ENCODE measurements at regions of chr12 and their contacts with region 1.

Region 1: GRCh38 chr12:3275171-3276041 is 198.2 kb downstream of the TSPAN9 start:
- DNase-seq: peak; percentile 87
- ATAC-seq: peak; percentile 83
- H3K4me3 Mint-ChIP-seq: no peak overlapping the region
- H3K27ac Mint-ChIP-seq: no peak overlapping the region
- H3K4me1 Mint-ChIP-seq: peaks cover 2% of the 10 kb centered on the region
- H3K27me3 Mint-ChIP-seq: peaks cover 8% of the 10 kb centered on the region

Region 2: DNA sequence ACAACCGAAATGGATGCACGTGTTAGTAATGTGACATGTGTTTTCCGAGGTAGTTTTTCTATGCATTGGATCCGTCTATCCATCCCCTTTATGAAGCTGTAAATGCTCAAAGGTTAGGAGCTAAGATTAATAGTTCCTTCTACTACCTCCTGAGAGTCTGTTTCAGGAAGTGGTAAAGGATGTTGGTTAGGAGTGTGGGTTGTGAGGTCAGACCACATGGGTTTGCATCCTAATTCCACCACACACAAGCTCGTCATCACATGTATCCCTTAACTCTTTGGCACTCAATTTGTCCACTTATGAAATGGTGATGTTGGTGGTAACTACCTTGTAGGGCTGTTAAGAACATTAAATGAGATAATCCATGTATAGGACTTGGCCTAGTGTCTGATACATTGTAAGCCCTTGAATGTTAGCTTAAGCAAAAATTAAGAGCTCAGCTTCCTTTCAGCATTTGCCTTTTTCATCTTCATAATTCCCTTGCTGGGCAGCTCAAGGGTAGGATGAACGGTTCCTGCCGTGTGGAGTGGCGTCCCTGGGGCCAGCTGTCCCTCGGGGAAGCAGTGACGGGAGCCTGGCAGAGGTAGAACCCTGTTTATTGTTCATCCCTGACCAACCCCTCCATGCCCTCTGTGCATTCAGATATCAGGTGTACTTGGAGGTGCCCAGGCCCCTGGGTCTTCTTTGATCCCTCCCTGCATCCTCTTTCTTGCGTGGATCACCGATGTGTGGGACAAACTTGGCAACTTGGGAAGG is 145.9 kb before region 1 on chr12:
- CTCF ChIA-PET with region 1: interaction called, 101 read pairs
- POLR2A ChIA-PET with region 1: no interaction called
- intact Hi-C with region 1: no loop called
- DNase-seq: peak; percentile 49
- ATAC-seq: peak; percentile 36
- H3K4me3 Mint-ChIP-seq: no peak overlapping the region
- H3K27ac Mint-ChIP-seq: no peak overlapping the region
- H3K4me1 Mint-ChIP-seq: peaks cover 21% of the 10 kb centered on the region
- H3K27me3 Mint-ChIP-seq: peaks cover 54% of the 10 kb centered on the region

Region 3: DNA sequence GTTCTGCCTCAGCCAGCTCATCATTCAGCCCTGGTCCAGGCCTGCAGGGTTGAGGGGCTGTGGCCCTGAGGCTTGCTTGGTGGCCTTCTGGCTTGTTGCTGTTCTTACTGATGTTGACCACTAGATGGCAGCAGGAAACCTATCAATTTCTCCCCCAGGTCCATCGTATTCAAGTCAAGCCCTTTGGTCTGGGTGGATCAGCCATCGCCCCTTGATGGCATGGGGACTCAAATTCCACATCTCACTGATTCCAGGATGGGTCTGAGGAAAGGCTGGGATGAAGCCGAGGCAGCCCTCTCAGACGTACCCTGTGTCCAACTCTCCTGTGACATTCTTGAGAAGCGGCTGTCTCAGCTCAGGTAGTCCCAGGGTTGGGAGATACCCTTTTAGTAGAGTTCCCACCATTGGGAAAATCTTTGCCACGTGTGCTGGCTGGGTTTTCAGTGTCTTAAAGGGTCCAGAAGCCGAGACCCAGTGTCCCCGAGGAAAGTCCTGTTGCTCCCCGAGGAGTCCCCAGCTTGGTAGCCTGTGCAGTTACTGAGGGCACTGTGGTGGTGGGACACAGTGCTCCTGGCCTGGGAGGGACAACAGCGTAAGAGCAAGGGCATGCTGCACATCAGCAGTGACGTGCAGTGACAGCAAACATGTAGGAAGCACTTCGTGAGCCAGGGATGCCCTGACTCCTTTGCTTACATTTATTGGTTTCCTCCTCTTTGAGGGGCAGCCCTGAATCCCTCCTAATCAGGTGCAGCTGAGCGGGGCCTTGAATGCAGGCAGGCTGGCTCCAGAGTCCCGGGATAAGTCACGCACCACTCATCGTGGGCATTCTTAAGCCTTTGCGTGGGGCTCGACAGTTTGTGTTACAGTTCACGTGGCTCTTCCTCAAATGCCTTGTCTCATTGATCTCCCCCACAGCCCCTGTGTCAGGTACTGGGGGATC is 139.6 kb before region 1 on chr12:
- CTCF ChIA-PET with region 1: interaction called, 101 read pairs
- POLR2A ChIA-PET with region 1: no interaction called
- intact Hi-C with region 1: loop called (anchors 1 kb)
- DNase-seq: peak; percentile 55
- ATAC-seq: peak; percentile 85
- H3K4me3 Mint-ChIP-seq: no peak overlapping the region
- H3K27ac Mint-ChIP-seq: no peak overlapping the region
- H3K4me1 Mint-ChIP-seq: peaks cover 2% of the 10 kb centered on the region
- H3K27me3 Mint-ChIP-seq: peaks cover 26% of the 10 kb centered on the region

Region 4: GRCh38 chr12:3202734-3203446 is 72.5 kb before region 1 on chr12:
- CTCF ChIA-PET with region 1: interaction called, 8 read pairs
- POLR2A ChIA-PET with region 1: no interaction called
- intact Hi-C with region 1: loop called in 1 of 2 experiments (anchors 5 kb)
- DNase-seq: peak; percentile 82
- ATAC-seq: peak; percentile 57
- H3K4me3 Mint-ChIP-seq: no peak overlapping the region
- H3K27ac Mint-ChIP-seq: no peak overlapping the region
- H3K4me1 Mint-ChIP-seq: peaks cover 9% of the 10 kb centered on the region
- H3K27me3 Mint-ChIP-seq: peaks cover 39% of the 10 kb centered on the region

Region 5: GRCh38 chr12:3261782-3262359 is 13.5 kb before region 1 on chr12:
- CTCF ChIA-PET with region 1: interaction called, 14 read pairs
- POLR2A ChIA-PET with region 1: no interaction called
- intact Hi-C with region 1: no loop called
- DNase-seq: no peak
- ATAC-seq: no peak
- H3K4me3 Mint-ChIP-seq: no peak overlapping the region
- H3K27ac Mint-ChIP-seq: no peak overlapping the region
- H3K4me1 Mint-ChIP-seq: no peaks in the 10 kb centered on the region
- H3K27me3 Mint-ChIP-seq: no peaks in the 10 kb centered on the region

Region 6: DNA sequence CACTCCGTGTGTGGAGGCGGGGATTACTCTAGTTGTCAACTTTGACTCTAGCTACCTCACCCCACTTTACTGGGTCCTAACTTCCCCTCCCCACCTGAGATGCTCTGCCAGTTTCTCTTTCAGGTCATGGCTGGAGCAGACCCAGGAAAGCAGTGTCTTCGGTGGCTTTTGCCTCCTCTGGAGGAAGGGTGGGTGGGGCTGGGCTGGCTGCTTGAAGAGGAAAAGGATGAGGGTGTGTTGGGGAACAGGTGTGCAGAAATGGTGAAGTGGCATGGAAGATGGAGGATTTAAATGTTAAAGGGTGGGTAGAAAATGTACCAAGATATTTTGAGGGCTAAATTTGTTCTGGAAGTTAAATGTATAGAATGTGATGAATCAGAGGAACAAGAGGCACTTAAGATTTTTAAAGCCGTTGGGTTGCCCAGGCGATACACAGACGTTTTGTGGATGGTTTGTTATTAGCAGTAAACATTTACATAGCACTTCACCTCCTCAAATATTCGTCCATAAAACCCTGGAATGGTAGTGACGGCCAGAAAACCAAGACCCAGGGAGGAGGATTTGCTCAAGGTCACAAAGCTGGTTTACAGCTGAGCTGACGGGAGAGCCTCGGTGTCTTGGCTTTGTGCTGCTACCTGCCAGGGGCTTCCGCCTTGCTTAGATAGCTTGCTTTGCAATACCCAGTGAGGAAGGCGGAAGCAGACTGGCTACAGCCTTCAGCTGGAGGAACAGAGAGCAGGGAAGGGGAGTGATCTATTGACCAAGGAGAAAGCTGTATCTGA is 143.4 kb after region 1 on chr12:
- CTCF ChIA-PET with region 1: no interaction called
- POLR2A ChIA-PET with region 1: no interaction called
- intact Hi-C with region 1: no loop called
- DNase-seq: no peak
- ATAC-seq: no peak
- H3K4me3 Mint-ChIP-seq: no peak overlapping the region
- H3K27ac Mint-ChIP-seq: no peak overlapping the region
- H3K4me1 Mint-ChIP-seq: no peaks in the 10 kb centered on the region
- H3K27me3 Mint-ChIP-seq: peaks cover 7% of the 10 kb centered on the region

Measured in activated CD4-positive, alpha-beta T cell treated with anti-CD3 and anti-CD28 coated beads for 36 hours (primary cell).